ENCODE measurements at regions of chr11 and their contacts with region 1.

Region 1: DNA sequence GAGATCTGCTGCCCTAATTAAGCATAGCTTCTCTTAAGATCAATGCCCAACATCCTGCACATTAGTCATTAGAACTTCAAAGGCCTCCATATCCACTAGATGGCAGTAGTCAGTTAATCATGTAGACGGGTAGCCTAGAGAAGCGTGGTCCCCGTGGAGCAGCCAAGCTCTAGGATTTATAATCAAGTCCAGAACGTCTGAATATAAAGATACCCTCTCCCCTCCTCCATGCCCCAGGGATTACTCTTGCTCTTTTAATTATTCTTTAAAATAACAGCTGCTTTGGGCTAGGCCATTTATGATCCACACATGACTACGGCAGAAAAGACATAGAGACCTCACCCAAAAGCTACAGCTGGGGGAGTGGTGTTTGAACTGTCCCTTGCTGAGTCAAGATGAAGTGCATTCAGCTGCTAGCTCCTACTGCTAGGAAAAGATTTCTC is 327.6 kb upstream of the PLET1 start:
- DNase-seq: peak; percentile 44
- H3K4me3 ChIP-seq: no peak overlapping the region
- H3K27ac ChIP-seq: peak overlapping the region; percentile 44 to 64 (median 52)
- H3K4me1 ChIP-seq: peaks cover 4 to 18% (median 11%) of the 10 kb centered on the region in 4 donors
- H3K27me3 ChIP-seq: no peaks in the 10 kb centered on the region
- CTCF ChIP-seq: peak; percentile 55 to 68 (median 62)
- EP300 ChIP-seq: no peak
- POLR2A ChIP-seq: no peak

Region 2: GRCh38 chr11:112485280-112485679 is 103.0 kb before region 1 on chr11:
- in situ Hi-C with region 1: loop called in 1 of 4 experiments (anchors 25 kb)
- intact Hi-C with region 1: no loop called
- DNase-seq: no peak
- H3K4me3 ChIP-seq: no peak overlapping the region
- H3K27ac ChIP-seq: no peak overlapping the region
- H3K4me1 ChIP-seq: no peaks in the 10 kb centered on the region
- H3K27me3 ChIP-seq: no peaks in the 10 kb centered on the region
- CTCF ChIP-seq: no peak
- EP300 ChIP-seq: no peak
- POLR2A ChIP-seq: no peak

Region 3: DNA sequence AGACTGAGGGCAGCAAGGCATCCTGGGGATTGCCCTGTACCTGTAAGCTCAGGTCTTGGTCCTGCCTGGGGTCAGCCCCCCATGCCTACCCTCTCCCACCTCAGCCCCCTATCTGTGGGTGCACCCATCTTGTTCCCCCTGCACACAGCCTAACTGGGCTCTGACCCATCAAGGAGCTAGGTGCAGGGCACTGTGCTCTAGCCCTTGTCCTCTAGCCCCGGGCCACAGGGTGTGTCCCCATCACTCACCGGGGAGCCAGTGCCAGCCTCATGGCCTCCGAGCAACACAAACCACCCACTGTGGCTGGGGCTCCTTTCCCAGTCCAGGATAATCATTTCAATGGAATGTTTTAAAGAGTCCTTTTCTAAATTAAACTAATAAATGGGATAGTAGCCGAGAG is 33.7 kb before region 1 on chr11:
- in situ Hi-C with region 1: no loop called
- intact Hi-C with region 1: no loop called
- DNase-seq: no peak
- H3K4me3 ChIP-seq: no peak overlapping the region
- H3K27ac ChIP-seq: no peak overlapping the region
- H3K4me1 ChIP-seq: no peaks in the 10 kb centered on the region
- H3K27me3 ChIP-seq: no peaks in the 10 kb centered on the region
- CTCF ChIP-seq: no peak
- EP300 ChIP-seq: no peak
- POLR2A ChIP-seq: no peak

Region 4: GRCh38 chr11:112784323-112785073 is 196.2 kb after region 1 on chr11:
- in situ Hi-C with region 1: loop called in 1 of 4 experiments (anchors 10 kb)
- intact Hi-C with region 1: no loop called
- DNase-seq: peak; percentile 32
- H3K4me3 ChIP-seq: no peak overlapping the region
- H3K27ac ChIP-seq: peak overlapping the region in 3 of 4 donors; percentile 39 to 48 (median 42)
- H3K4me1 ChIP-seq: peaks cover 0 to 12% (median 9%) of the 10 kb centered on the region in 4 donors
- H3K27me3 ChIP-seq: no peaks in the 10 kb centered on the region
- CTCF ChIP-seq: no peak
- EP300 ChIP-seq: no peak
- POLR2A ChIP-seq: no peak

Region 5: DNA sequence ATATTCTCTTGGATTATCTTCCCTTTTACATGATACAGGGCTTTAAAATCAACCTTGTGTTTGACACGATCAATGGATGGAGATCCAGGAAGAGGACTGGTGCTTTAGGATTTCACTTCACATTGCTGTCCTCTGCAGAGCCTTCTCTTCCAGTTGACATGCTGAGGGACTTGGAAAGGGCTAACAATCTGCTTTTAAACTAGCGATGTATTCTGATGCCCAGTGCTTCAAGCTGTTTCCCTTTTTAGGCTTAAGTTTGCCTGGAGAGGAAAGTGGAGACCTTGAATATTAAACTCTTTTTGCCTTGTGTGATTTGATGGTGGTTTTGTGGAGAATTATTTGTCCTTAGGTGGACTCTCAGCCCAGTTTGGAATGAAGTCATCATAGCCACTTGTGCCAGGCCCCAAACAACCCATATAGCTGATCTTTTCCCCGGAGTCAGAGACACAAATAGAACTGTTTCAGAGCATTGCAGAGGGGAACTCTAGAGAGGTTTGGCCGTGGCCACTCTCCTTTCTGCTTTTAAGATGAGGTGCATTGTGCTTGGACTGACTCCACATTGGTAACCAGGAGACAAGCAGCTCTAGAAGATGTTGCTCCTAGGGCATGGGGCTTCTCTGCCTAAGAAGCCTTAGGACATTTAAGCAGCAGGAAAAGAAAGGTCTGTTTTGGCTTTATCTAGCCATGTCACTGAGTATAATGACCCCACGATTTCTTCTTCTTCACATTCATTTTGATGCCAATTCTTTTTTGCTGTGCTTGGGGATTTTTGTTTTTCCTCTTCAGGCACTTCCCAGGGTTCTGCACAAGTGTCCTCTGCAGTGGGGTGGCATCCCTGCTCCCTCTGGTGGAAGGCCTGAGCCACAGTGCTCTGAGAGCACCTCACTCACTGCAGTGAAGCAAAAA is 525.8 kb after region 1 on chr11:
- in situ Hi-C with region 1: loop called (anchors 25 kb)
- intact Hi-C with region 1: loop called (anchors 1 kb)
- DNase-seq: peak; percentile 27
- H3K4me3 ChIP-seq: no peak overlapping the region
- H3K27ac ChIP-seq: no peak overlapping the region
- H3K4me1 ChIP-seq: peaks cover 0 to 8% (median 0%) of the 10 kb centered on the region in 4 donors
- H3K27me3 ChIP-seq: no peaks in the 10 kb centered on the region
- CTCF ChIP-seq: peak; percentile 37 to 65 (median 48)
- EP300 ChIP-seq: no peak
- POLR2A ChIP-seq: no peak